Dorsolateral prefrontal cortex (tissue), 120 donors: ENCODE measurements at regions of chr5 and their contacts with region 1.

Region 1: GRCh38 chr5:176793337-176794138 is 16.8 kb upstream of the UNC5A start:
- DNase-seq: peak in 8 of 10 donors; percentile 59 to 79 (median 75)
- H3K4me3 ChIP-seq: peak overlapping the region in 29 of 59 donors; percentile 3 to 49 (median 32)
- H3K27ac ChIP-seq: peak overlapping the region in 42 of 59 donors; percentile 0 to 79 (median 46)
- H3K27me3 ChIP-seq: peaks cover 0 to 44% (median 4%) of the 10 kb centered on the region in 45 donors
- CTCF ChIP-seq: no peak

Region 2: GRCh38 chr5:176744584-176744965 is 49.0 kb before region 1 on chr5:
- intact Hi-C with region 1: loop called (anchors 5 to 10 kb)
- DNase-seq: peak in 3 of 10 donors; percentile 31 to 37 (median 34)
- H3K4me3 ChIP-seq: peak overlapping the region in 13 of 59 donors; percentile 41 to 62 (median 55)
- H3K27ac ChIP-seq: peak overlapping the region in 50 of 59 donors; percentile 29 to 94 (median 86)
- H3K27me3 ChIP-seq: peaks cover 0 to 50% (median 3%) of the 10 kb centered on the region in 45 donors
- CTCF ChIP-seq: peak in 35 of 56 donors; percentile 9 to 51 (median 27)

Region 3: DNA sequence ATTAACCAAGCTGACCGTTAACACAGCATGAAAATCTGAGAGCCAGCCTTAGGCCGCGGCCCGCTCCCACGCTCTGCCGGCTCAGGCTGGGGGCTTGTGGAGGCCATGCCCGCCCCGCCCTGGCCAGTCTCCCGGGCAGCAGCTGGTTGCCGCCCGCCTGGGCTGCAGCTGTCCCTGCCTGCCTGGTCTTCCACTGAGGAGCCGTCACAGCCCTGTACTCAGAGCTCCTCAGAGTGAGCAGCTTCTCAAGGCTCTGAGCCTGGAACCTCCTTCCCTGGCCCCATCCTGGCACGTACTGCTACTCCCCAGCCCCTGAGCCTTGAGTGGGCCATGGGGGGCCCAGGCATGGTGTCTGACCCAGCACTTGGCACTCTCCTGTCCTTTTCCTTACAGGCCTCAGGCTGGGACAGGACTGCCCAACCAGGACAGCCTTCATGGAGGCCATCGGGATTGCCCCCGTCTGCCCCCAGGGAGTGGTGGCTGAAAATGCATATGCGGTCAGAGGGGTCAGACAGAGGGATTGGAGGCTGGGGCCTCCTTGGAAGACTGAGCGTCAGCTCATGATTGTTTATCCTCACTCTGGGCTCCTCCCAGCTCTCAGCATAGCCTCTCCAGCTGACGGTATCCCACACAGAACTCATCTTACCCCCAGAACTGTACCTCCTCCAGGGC is 305.1 kb after region 1 on chr5:
- intact Hi-C with region 1: no loop called
- DNase-seq: peak in 4 of 10 donors; percentile 17 to 61 (median 27)
- H3K4me3 ChIP-seq: peak overlapping the region in 1 of 59 donors; percentile 11
- H3K27ac ChIP-seq: peak overlapping the region in 15 of 59 donors; percentile 3 to 53 (median 26)
- H3K27me3 ChIP-seq: peaks cover 0 to 3% (median 0%) of the 10 kb centered on the region in 45 donors
- CTCF ChIP-seq: no peak